Testis (tissue), 5 donors: ENCODE measurements at regions of chr7 and their contacts with region 1.

Region 1: GRCh38 chr7:142776206-142776844 is 5.6 kb downstream of the PRSS2 start:
- DNase-seq: no peak
- H3K4me3 ChIP-seq: no peak overlapping the region
- H3K27ac ChIP-seq: no peak overlapping the region
- H3K4me1 ChIP-seq: no peaks in the 10 kb centered on the region
- H3K27me3 ChIP-seq: no peaks in the 10 kb centered on the region
- CTCF ChIP-seq: no peak
- POLR2A ChIP-seq: no peak

Region 2: DNA sequence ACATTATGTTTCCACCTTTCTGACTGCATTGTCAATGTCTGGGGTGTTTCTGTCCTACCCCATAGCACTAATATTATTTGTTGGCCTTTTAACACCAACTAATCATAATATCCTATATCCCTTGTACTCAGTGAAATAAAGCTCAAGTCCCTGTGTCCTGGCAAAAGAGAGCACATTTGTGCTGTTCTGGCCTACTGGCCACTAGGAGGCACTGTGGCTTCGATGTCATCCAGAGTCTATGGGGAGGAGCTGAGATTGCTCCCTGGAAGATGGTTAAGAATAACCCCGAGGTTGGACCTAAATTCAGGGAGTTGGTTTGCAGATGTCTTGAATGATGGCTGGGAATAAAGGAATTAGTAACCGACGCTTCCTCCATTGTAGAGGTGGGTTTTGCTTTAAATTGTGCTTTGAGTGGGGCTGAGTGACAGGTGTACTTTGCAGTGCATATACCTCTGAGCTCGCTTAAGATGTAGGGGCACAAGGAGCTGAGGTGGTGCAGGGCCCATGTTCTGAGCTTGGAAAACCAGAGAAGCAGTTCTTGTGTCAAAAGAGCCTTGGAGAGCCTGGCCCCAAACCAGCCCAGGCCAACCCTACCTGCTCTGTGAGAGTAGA is 218.2 kb before region 1 on chr7:
- intact Hi-C with region 1: no loop called
- DNase-seq: peak; percentile 63
- H3K4me3 ChIP-seq: no peak overlapping the region
- H3K27ac ChIP-seq: no peak overlapping the region
- H3K4me1 ChIP-seq: no peaks in the 10 kb centered on the region
- H3K27me3 ChIP-seq: no peaks in the 10 kb centered on the region
- CTCF ChIP-seq: peak in 2 of 3 experiments; percentile 9 to 59
- POLR2A ChIP-seq: no peak

Region 3: DNA sequence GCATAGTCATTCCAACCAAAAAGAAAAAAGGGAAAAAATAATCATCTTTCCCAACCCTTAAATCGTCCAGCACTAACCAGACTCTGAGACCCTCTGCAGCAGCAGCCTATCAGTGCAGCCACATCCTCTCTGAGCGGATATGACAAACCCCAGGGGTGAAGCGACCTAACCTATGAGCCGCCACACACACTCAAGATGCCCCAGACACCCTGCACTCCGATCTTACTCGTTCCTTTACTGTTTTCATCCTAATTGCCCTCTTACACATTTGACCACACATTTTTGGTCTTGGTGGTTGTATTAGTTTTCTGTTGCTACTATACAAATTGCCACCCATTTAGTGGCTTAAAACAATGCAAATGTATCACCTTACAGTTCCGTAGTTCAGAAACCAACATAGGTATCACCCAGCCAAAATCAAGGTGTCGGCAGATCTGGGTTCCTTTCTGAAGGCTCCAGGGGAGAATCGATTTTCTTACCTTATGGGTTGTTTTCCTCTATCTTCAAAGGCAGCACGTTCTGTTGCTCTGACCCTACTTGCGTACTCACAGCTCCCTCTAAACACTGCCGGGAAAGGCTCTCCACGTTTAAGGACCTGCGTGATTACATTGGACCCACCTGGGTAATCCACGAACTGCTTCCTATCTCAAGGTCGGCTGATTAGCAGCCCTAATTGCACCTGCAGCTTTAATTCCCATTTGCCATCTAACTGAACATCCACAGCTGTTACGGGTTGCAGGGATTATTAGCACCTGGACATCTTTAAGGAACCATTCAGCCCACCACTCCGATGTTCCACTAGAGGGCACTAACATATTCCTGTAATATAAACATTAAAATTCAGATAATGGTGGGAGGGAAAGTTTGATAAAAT is 64.3 kb before region 1 on chr7:
- intact Hi-C with region 1: loop called (anchors 5 kb)
- DNase-seq: peak; percentile 51
- H3K4me3 ChIP-seq: no peak overlapping the region
- H3K27ac ChIP-seq: peak overlapping the region in 1 of 2 donors; percentile 34
- H3K4me1 ChIP-seq: peaks cover 9% of the 10 kb centered on the region
- H3K27me3 ChIP-seq: no peaks in the 10 kb centered on the region
- CTCF ChIP-seq: peak; percentile 49 to 71 (median 61)
- POLR2A ChIP-seq: no peak

Region 4: DNA sequence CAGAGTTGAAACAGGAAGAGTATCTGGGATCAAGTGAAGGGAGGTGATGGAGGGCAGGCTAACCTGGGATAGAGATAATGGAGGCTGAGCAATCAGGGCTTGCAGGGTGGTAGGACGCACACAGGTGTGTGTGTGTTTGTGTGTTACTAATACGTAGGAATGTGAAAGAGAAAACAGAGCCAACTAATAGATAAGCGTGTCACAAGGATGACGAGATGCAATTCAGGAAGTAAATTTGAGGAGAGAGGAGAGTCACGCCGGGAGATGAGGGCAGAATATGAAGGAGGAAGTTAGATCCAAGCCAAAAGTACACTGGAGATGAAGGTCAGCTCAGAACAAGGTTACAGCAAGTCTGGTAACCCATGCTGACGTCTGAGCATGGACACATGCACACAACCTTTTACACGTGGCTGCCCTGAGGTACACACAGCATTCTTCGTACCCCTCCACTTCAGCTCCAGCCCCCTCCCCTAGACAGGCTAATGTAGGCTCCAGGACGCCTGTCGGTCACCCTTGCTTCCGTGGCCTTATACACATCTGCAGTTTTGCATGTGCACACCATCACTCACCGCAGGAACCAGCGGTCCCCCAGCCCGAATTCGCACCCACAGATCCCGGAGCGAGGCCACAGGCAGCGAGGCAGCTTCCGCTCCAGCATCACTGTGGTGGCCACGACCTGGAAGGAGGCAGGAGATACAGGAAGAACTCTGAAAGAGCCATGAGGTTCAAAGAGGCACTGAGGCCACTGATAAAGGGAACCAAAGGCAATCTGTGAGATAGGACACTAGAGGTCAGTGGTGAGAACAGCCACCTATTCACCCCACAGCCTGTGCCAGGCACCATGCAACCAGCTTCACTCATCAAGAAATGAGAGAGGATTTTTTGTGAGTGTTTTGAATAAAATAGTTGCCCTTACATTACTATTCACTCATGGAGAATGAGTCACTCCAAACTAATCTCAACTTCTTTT is 132.9 kb after region 1 on chr7:
- intact Hi-C with region 1: no loop called
- DNase-seq: peak; percentile 43
- H3K4me3 ChIP-seq: no peak overlapping the region
- H3K27ac ChIP-seq: no peak overlapping the region
- H3K4me1 ChIP-seq: no peaks in the 10 kb centered on the region
- H3K27me3 ChIP-seq: no peaks in the 10 kb centered on the region
- CTCF ChIP-seq: peak in 1 of 3 experiments; percentile 17
- POLR2A ChIP-seq: no peak